ENCODE measurements at regions of chr9 and their contacts with region 1.

Region 1: DNA sequence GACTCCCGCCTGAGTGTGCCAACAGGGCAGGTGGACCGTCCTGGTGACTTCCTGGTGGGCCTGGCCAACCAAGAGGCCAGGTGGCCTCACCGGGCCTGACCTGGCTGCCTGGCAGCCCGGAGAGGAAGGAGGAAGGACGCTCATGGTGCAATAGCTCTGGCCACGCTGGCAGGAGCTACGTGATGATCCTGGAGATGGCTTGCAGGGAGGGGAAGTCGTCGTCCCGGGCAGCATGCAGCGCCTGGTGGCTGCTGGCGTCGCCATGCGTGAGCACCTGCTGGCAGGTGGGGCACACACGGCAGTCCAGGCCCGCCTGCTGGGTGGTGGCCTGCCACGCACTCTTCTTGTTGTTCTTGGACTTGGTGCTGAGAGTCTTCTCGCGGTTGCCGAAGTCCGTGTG is 26.3 kb downstream of the SPATA31C1 start:
- DNase-seq: no peak
- ATAC-seq: no peak
- H3K4me3 ChIP-seq: no peak overlapping the region
- H3K27ac ChIP-seq: no peak overlapping the region
- H3K4me1 ChIP-seq: peaks cover 0 to 7% of the 10 kb centered on the region in 2 experiments; a peak in 2 of 5 replicates
- H3K27me3 ChIP-seq: peaks cover 0 to 7% of the 10 kb centered on the region in 2 experiments; a peak in 1 of 5 replicates
- CTCF ChIP-seq: no peak
- EP300 ChIP-seq: no peak
- POLR2A ChIP-seq: no peak
- RAD21 ChIP-seq: no peak

Region 2: DNA sequence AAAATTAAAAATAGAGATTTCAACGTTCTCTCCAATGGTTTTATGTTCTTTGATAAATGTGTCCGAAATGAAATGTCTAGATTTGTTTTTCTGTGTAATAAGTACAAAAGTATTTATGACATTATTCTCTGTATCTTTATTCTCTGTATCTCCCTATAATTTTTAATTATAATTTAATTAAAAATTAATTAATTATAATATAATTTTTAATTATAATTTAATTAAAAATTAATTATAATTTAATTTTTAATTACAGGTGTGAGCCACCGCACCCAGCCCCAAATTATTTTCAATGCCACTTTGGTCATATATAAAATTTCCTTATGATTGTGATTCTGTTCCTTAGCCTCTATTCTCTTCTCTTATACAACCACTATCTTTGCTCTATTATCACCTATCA is 165.9 kb after region 1 on chr9:
- CTCF ChIA-PET with region 1: no interaction called
- POLR2A ChIA-PET with region 1: no interaction called
- in situ Hi-C with region 1: loop called (anchors 5 kb)
- intact Hi-C with region 1: no loop called
- DNase-seq: no peak
- ATAC-seq: no peak
- H3K4me3 ChIP-seq: no peak overlapping the region
- H3K27ac ChIP-seq: no peak overlapping the region
- H3K4me1 ChIP-seq: no peaks in the 10 kb centered on the region; a peak in 1 of 5 replicates
- H3K27me3 ChIP-seq: 0 out of 5 replicates have a peak, but pooled peaks cover 0 to 6% of the 10 kb centered on the region in 2 experiments
- CTCF ChIP-seq: no peak
- EP300 ChIP-seq: no peak
- POLR2A ChIP-seq: no peak
- RAD21 ChIP-seq: no peak